ENCODE measurements at regions of chr6 and their contacts with region 1.

Region 1: DNA sequence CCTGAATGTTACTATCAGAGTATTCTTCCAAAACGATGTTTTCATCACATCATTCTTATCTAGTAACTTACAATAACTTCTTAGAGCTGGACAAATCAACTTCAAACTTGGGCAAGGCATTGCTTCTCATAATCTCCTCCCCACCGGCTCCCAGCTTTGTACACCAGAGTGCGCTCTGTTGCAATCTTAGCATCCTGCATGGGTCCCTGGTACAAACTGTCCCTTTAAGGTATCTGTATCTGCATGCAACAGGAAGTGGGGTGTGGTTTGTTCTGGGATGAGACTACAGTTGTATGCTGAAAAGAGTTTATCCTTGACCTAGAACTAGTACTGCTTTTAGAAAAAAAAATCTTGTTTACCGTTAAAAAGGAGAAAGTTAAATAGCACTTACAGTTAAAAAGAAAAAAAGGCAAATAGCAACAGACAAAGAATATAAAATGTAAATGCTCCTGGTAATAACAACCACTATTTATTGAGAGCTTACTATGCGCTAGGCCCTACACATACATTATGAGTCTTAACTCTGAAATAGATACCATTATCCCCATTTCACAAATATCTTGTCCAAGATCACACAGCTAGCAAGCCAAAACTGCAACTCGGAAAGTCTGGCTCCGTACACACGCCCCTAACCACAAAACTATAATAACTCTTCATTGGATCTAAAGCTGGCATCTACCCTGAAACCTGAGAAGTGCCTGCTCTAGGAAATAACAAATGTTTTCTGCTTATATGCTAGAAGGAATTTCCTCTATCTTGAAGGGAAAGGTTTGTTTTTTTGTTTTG is 9.8 kb upstream of the HECA start:
- DNase-seq: peak; percentile 90
- ATAC-seq: peak; percentile 96
- H3K4me3 Mint-ChIP-seq: peak overlapping the region; percentile 58
- H3K27ac Mint-ChIP-seq: peak overlapping the region; percentile 95
- H3K4me1 Mint-ChIP-seq: peaks cover 51% of the 10 kb centered on the region
- H3K27me3 Mint-ChIP-seq: no peaks in the 10 kb centered on the region

Region 2: GRCh38 chr6:138817822-138818308 is 307.2 kb before region 1 on chr6:
- CTCF ChIA-PET with region 1: interaction called, 3 read pairs
- POLR2A ChIA-PET with region 1: no interaction called
- intact Hi-C with region 1: loop called in 1 of 2 experiments (anchors 5 kb)
- DNase-seq: peak; percentile 43
- ATAC-seq: peak; percentile 75
- H3K4me3 Mint-ChIP-seq: no peak overlapping the region
- H3K27ac Mint-ChIP-seq: peak overlapping the region; percentile 82
- H3K4me1 Mint-ChIP-seq: peaks cover 24% of the 10 kb centered on the region
- H3K27me3 Mint-ChIP-seq: no peaks in the 10 kb centered on the region

Region 3: DNA sequence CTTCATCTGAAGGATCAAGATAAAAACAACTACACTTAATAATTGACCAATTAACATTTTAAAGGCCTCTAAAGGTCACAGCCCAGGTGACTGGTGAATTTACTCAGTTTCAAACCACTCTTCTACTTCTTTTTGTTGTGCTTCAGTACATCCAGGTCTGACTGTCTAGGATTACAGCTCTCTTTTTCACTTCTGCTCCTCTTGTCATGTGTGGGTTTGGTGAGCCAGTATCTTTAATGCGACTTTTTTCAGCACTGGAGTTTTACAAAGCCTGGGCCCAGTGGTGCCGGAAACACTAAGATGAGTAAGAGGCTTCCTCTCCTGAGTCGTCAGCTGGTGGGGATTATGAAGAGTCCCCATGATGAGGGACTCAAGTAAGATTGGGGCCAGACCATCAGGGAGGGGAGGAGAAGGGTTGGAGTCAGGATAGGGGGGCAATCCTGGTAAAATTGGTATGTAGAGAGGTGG is 36.8 kb after region 1 on chr6:
- CTCF ChIA-PET with region 1: interaction called, 10 read pairs
- POLR2A ChIA-PET with region 1: interaction called, 3 read pairs
- intact Hi-C with region 1: no loop called
- DNase-seq: peak; percentile 85
- ATAC-seq: peak; percentile 86
- H3K4me3 Mint-ChIP-seq: peak overlapping the region; percentile 59
- H3K27ac Mint-ChIP-seq: peak overlapping the region; percentile 97
- H3K4me1 Mint-ChIP-seq: peaks cover 91% of the 10 kb centered on the region
- H3K27me3 Mint-ChIP-seq: no peaks in the 10 kb centered on the region

Region 4: DNA sequence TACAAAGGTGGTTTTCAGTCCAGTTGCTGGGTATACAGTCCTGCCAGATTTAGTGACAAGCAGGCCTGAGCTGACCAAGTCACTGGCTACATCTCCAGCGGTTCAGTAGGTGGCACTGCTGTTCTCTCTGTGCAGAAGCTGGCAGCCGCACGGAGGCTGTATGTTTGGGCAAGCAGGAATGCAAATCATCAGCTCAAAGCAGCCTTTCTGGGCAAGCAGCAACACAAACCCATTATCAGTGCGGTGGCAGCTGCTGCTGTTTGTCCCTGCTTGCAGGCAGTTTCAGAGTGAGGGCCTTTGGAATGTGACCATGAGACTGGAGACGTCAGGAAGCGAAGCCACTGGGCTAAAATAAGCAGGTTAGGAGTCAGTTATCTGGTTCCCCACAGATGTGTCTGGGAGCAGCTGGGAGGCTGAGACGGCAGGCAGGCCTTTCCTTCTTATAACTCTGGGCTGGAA is 94.2 kb after region 1 on chr6:
- CTCF ChIA-PET with region 1: interaction called, 17 read pairs
- POLR2A ChIA-PET with region 1: no interaction called
- intact Hi-C with region 1: loop called (anchors 1 to 2 kb)
- DNase-seq: peak; percentile 86
- ATAC-seq: peak; percentile 100
- H3K4me3 Mint-ChIP-seq: no peak overlapping the region
- H3K27ac Mint-ChIP-seq: peak overlapping the region; percentile 73
- H3K4me1 Mint-ChIP-seq: peaks cover 10% of the 10 kb centered on the region
- H3K27me3 Mint-ChIP-seq: no peaks in the 10 kb centered on the region

Region 5: GRCh38 chr6:139308286-139308916 is 183.3 kb after region 1 on chr6:
- CTCF ChIA-PET with region 1: no interaction called
- POLR2A ChIA-PET with region 1: no interaction called
- intact Hi-C with region 1: no loop called
- DNase-seq: no peak
- ATAC-seq: peak; percentile 82
- H3K4me3 Mint-ChIP-seq: no peak overlapping the region
- H3K27ac Mint-ChIP-seq: peak overlapping the region; percentile 87
- H3K4me1 Mint-ChIP-seq: peaks cover 29% of the 10 kb centered on the region
- H3K27me3 Mint-ChIP-seq: no peaks in the 10 kb centered on the region

Region 6: GRCh38 chr6:139369568-139370282 is 244.6 kb after region 1 on chr6:
- CTCF ChIA-PET with region 1: interaction called, 18 read pairs
- POLR2A ChIA-PET with region 1: no interaction called
- intact Hi-C with region 1: loop called (anchors 1 kb)
- DNase-seq: peak; percentile 32
- ATAC-seq: no peak
- H3K4me3 Mint-ChIP-seq: peak overlapping the region; percentile 12
- H3K27ac Mint-ChIP-seq: peak overlapping the region; percentile 49
- H3K4me1 Mint-ChIP-seq: peaks cover 37% of the 10 kb centered on the region
- H3K27me3 Mint-ChIP-seq: no peaks in the 10 kb centered on the region

Measured in activated CD4-positive, alpha-beta T cell treated with anti-CD3 and anti-CD28 coated beads for 36 hours (primary cell).